Body of pancreas (tissue), 4 donors: ENCODE measurements at regions of chr6 and their contacts with region 1.

Region 1: DNA sequence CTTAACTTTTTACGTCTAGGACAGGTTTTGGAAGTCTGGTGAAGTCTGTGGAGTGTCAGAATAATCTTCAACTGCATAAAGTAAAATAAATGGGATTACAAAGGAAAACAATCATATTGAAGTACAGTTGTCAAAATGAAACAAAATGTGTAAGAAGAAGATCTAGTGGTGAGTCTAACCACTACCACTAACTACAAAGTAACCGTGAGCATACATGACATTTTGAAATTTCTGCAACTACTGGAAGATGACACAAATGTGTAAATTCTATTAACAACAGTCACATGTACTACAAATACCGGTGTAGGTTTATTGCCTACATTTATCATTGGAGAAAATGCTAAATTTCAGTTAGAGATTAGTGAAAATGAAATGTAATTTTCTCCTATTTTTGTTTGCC is 29.7 kb downstream of the VPS52 start:
- DNase-seq: no peak
- ATAC-seq: no peak
- H3K4me3 ChIP-seq: no peak overlapping the region
- H3K27ac ChIP-seq: no peak overlapping the region
- H3K4me1 ChIP-seq: no peaks in the 10 kb centered on the region
- H3K27me3 ChIP-seq: no peaks in the 10 kb centered on the region
- CTCF ChIP-seq: no peak
- POLR2A ChIP-seq: no peak

Region 2: GRCh38 chr6:32127717-32128592 is 1114.0 kb before region 1 on chr6 and contains the start of gene ATF6B:
- intact Hi-C with region 1: no loop called
- DNase-seq: peak; percentile 98 to 100 (median 100)
- ATAC-seq: peak; percentile 91
- H3K4me3 ChIP-seq: peak within 1 kb of the TSS; percentile 72 to 88
- H3K27ac ChIP-seq: peak within 1 kb of the TSS; percentile 68 to 95 (median 86)
- H3K4me1 ChIP-seq: peaks cover 38% of the 10 kb centered on the region
- H3K27me3 ChIP-seq: no peaks in the 10 kb centered on the region
- CTCF ChIP-seq: no peak
- POLR2A ChIP-seq: peak in 2 of 3 donors; percentile 76 to 81
- total RNA-seq, gene ATF6B: 26.5 to 32.3 TPM

Region 3: GRCh38 chr6:33008944-33009861 is 232.8 kb before region 1 on chr6 and contains the start of gene HLA-DOA:
- intact Hi-C with region 1: loop called (anchors 5 kb)
- DNase-seq: peak in 1 of 4 donors; percentile 35
- ATAC-seq: peak; percentile 56
- H3K4me3 ChIP-seq: no peak within 1 kb of the TSS
- H3K27ac ChIP-seq: peak within 1 kb of the TSS in 2 of 4 donors; percentile 5 to 41
- H3K4me1 ChIP-seq: peaks cover 6% of the 10 kb centered on the region
- H3K27me3 ChIP-seq: no peaks in the 10 kb centered on the region
- CTCF ChIP-seq: no peak
- POLR2A ChIP-seq: peak in 1 of 3 donors; percentile 27
- total RNA-seq, gene HLA-DOA: 2.0 to 83.3 TPM